Mammary epithelial cell (primary cell): ENCODE measurements at regions of chr1 and their contacts with region 1.

Region 1: GRCh38 chr1:151198255-151199127 is at the start of gene PIP5K1A:
- DNase-seq: peak; percentile 95
- H3K4me3 ChIP-seq: peak within 1 kb of the TSS; percentile 64 to 83 (median 71)
- H3K27ac ChIP-seq: peak within 1 kb of the TSS; percentile 90
- H3K4me1 ChIP-seq: peaks cover 36% of the 10 kb centered on the region
- H3K27me3 ChIP-seq: no peaks in the 10 kb centered on the region
- CTCF ChIP-seq: no peak
- total RNA-seq, gene PIP5K1A: 94.2 to 103 TPM

Region 2: DNA sequence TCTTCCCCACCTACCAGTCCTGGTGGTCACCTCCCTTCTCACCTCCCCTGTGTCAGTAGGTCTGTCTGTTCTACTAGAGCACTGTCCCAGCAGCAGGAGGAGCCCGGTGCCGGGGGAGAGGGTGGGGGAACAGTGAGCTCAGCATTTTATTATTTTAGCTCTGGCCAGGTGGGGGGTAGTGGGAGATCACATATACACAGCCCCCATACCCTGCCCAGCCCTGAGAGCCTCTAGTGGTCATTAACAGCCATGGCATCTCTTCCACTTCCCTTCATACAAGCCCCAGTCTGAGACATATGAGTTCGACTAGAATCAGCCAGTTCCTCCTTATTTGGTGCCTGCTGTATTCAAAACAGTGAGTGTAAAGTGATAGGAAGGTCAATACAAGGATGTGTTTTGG is 22.6 kb before region 1 on chr1 and contains the start of gene TMOD4:
- CTCF ChIA-PET with region 1: no interaction called
- dilution Hi-C with region 1: no loop called
- in situ Hi-C with region 1: no loop called
- intact Hi-C with region 1: loop called (anchors 1 kb)
- DNase-seq: no peak
- H3K4me3 ChIP-seq: no peak within 1 kb of the TSS
- H3K27ac ChIP-seq: no peak within 1 kb of the TSS
- H3K4me1 ChIP-seq: peaks cover 11% of the 10 kb centered on the region
- H3K27me3 ChIP-seq: no peaks in the 10 kb centered on the region
- CTCF ChIP-seq: peak; percentile 49 to 52
- total RNA-seq, gene TMOD4: not detected

Region 3: DNA sequence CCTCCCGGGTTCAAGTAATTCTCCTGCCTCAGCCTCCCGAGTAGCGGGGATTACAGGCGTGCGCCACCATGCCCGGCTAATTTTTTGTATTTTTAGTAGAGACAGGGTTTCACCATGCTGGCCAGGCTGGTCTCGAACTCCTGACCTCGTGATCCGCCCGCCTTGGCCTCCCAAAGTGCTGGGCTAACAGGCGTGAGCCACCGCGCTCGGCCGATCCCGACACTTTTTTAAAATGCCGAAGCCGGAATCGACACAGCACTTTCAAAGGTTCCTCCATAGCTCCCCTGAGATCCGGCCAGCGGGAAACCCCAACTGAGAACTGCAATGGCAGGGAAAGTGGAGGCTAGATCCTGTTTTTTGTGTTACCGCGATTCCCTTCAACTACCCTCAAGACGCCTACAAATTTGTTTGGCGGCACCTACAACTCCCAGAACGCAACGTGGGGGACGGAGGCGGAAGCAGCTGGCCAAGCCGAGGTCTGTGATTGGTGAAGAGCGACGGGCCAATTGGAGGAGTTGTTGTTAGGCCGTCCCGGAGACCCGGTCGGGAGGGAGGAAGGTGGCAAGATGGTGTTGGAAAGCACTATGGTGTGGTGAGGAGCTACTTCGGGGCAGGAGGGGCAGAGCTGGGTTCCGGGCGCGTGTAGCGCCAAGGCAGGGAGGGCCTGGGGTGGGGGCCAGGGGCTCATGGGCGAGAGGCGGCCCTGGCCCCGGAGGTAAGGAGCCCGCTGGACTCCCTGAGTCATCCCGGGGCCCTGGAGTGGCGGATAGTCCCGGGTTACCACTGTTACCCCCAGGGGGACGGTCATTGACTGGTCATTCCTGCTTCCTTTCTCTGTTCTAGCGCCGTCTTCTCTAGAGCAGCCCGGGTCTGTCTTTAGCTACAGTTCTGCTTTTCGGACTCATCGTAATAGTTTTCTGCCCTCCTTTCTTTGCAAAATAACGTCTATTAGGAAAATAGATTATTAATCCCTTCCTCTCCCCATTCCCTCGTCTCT is 56.0 kb after region 1 on chr1 and contains the start of gene PSMD4:
- CTCF ChIA-PET with region 1: interaction called, 12 read pairs
- dilution Hi-C with region 1: no loop called
- in situ Hi-C with region 1: loop called in 1 of 2 experiments (anchors 5 kb)
- intact Hi-C with region 1: loop called (anchors 1 kb)
- DNase-seq: peak; percentile 97
- H3K4me3 ChIP-seq: peak within 1 kb of the TSS; percentile 60 to 75 (median 72)
- H3K27ac ChIP-seq: peak within 1 kb of the TSS; percentile 70
- H3K4me1 ChIP-seq: peaks cover 9% of the 10 kb centered on the region
- H3K27me3 ChIP-seq: no peaks in the 10 kb centered on the region
- CTCF ChIP-seq: no peak
- total RNA-seq, gene PSMD4: 94.7 to 167 TPM

Region 4: DNA sequence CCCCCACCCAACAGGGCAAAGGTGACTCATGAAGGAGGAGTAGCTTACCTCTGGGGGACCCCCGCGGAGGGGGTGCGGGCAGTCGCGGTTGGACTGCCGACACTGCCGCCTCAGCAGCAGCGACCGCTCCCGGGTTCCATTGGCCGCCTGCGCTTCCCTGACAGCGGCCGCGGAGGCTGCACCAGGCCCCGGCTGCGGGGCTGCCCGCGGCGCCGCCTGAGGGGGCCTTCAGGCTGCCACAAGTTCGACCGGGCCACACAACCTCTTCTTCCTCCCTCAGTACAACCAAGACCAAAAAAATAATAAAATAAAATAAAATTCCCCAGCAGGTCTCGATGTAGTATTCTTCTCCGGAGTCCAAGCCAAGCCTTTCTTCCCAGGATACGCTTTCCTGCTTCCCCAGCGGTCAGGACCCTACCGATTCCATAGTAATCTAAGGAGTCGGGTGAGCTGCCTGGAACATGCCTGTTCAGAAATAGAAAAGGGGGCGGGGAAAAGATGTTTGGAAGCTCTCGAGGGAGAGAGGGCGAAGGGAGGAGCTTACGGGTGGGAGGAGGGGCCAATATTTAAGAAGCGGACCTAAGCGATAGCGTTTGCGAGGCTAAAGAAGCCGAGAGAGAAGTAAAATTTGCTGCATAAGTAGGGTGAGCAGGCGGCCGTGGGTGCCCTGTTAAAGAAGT is 128.9 kb after region 1 on chr1 and contains the start of gene PI4KB:
- CTCF ChIA-PET with region 1: no interaction called
- dilution Hi-C with region 1: no loop called
- in situ Hi-C with region 1: no loop called
- intact Hi-C with region 1: loop called (anchors 5 kb)
- DNase-seq: peak; percentile 97
- H3K4me3 ChIP-seq: peak within 1 kb of the TSS; percentile 75 to 83 (median 79)
- H3K27ac ChIP-seq: peak within 1 kb of the TSS; percentile 93
- H3K4me1 ChIP-seq: peaks cover 15% of the 10 kb centered on the region
- H3K27me3 ChIP-seq: no peaks in the 10 kb centered on the region
- CTCF ChIP-seq: no peak
- total RNA-seq, gene PI4KB: 46.7 to 58.3 TPM

Region 5: DNA sequence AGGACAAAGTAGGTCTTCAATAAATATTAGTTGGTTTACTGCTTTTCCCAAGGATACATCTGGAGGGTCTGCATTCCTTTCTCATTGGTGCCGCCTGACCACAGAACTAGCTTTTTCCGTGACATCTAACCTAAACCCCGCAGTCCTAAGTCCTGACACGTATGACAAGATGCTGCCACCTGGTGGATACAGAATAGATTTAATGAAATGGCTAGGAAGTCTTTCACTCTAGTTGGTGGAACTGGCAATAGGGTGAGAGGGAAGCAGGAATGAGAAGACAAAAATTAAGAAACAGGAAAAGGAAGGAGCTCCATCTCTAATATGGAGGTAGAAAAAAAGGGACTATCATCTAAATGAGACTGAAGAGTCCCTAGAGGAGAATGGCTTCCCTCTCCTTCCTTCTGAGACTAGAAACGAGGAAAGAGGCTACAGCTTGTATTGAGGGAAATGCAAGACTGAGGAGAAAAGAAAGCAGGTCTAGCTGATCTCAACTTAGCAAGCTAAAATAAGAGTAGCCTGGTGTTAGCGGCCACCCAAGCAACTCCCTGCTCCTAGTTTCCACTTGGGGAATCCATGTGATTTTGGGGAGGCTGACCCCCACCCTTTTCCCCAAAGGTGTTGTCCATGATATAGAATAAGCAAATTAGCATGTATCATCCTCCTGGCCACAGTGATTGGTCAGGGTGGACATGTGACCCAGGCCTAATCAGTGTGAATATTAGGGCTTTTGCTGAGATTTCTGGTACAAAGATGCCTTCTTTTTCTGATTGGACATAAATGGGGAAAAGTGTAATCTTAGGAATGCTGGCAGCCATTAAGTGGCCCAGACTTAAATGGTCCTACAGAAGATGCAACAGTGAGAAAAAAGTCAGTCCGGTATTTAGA is 142.6 kb after region 1 on chr1:
- CTCF ChIA-PET with region 1: no interaction called
- dilution Hi-C with region 1: no loop called
- in situ Hi-C with region 1: no loop called
- intact Hi-C with region 1: loop called (anchors 2 kb)
- DNase-seq: peak; percentile 72
- H3K4me3 ChIP-seq: no peak overlapping the region
- H3K27ac ChIP-seq: no peak overlapping the region
- H3K4me1 ChIP-seq: peaks cover 4% of the 10 kb centered on the region
- H3K27me3 ChIP-seq: no peaks in the 10 kb centered on the region
- CTCF ChIP-seq: peak; percentile 71 to 72